H1 (cell line): ENCODE measurements at regions of chr9 and their contacts with region 1.

Region 1: DNA sequence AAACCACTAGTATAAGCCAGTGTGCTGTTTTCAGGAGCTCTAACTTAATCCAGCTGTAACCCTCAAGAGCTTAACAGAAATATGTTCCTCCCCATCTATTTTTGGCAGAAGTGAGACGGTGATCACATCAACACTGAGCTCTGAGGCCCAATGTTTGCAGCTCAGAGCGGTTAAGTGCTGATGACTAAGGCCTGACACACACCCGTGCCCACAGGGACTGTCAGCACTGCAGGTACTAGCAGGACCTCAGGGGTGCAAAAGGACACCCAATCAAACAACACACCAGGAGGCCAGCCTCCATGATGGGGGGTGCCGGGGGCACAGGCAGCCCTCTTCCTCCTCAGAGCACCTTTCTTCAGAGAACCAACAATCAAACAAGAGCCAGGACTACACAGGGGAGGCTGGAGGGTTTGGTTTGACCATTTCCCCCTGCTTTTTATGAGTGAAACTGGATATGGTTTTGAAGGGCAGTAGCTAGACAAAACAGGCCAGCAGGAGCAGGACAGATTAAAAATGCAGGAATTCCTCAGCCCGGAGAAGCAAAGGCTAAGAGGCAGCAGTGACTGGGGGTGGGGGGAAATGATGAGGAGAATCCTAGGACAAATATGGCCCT is 61.3 kb downstream of the RAPGEF1 start:
- DNase-seq: no peak
- H3K4me3 ChIP-seq: peak overlapping the region in 1 of 4 experiments; percentile 8; a peak in 1 of 8 replicates
- H3K27ac ChIP-seq: peak overlapping the region; percentile 38; the same call in 1 of the 2 replicates
- H3K4me1 ChIP-seq: peaks cover 9 to 44% (median 32%) of the 10 kb centered on the region in 4 experiments
- H3K27me3 ChIP-seq: no peaks in the 10 kb centered on the region
- CTCF ChIP-seq: no peak
- EP300 ChIP-seq: no peak
- POLR2A ChIP-seq: no peak
- RAD21 ChIP-seq: no peak

Region 2: GRCh38 chr9:131697097-131697496 is 18.5 kb after region 1 on chr9:
- CTCF ChIA-PET with region 1: interaction called, 17 read pairs
- POLR2A ChIA-PET with region 1: interaction called, 6 read pairs
- DNase-seq: no peak
- H3K4me3 ChIP-seq: no peak overlapping the region
- H3K27ac ChIP-seq: no peak overlapping the region
- H3K4me1 ChIP-seq: peaks cover 16 to 43% (median 31%) of the 10 kb centered on the region in 4 experiments
- H3K27me3 ChIP-seq: no peaks in the 10 kb centered on the region
- CTCF ChIP-seq: peak; percentile 19 to 22 (median 21); a peak in 3 of 4 replicates
- EP300 ChIP-seq: no peak
- POLR2A ChIP-seq: no peak
- RAD21 ChIP-seq: peak in 1 of 2 experiments; percentile 27; a peak in 1 of 4 replicates

Region 3: GRCh38 chr9:131722009-131722629 is 43.5 kb after region 1 on chr9:
- CTCF ChIA-PET with region 1: interaction called, 10 read pairs
- POLR2A ChIA-PET with region 1: interaction called, 3 read pairs
- DNase-seq: no peak
- H3K4me3 ChIP-seq: no peak overlapping the region
- H3K27ac ChIP-seq: no peak overlapping the region
- H3K4me1 ChIP-seq: peaks cover 0 to 3% (median 1%) of the 10 kb centered on the region in 4 experiments; a peak in 2 of 7 replicates
- H3K27me3 ChIP-seq: no peaks in the 10 kb centered on the region
- CTCF ChIP-seq: peak in 2 of 3 experiments; percentile 22 to 31; a peak in 2 of 4 replicates
- EP300 ChIP-seq: no peak
- POLR2A ChIP-seq: no peak
- RAD21 ChIP-seq: peak in 1 of 2 experiments; percentile 6; a peak in 1 of 4 replicates

Region 4: GRCh38 chr9:131755541-131756198 is 77.1 kb after region 1 on chr9:
- CTCF ChIA-PET with region 1: no interaction called
- POLR2A ChIA-PET with region 1: no interaction called
- DNase-seq: peak; percentile 74 to 93
- H3K4me3 ChIP-seq: no peak overlapping the region
- H3K27ac ChIP-seq: no peak overlapping the region
- H3K4me1 ChIP-seq: no peaks in the 10 kb centered on the region; a peak in 1 of 7 replicates
- H3K27me3 ChIP-seq: no peaks in the 10 kb centered on the region
- CTCF ChIP-seq: peak; percentile 90 to 95 (median 94)
- EP300 ChIP-seq: no peak
- POLR2A ChIP-seq: no peak
- RAD21 ChIP-seq: peak; percentile 77 to 78